ENCODE measurements at regions of chr7 and their contacts with region 1.

Region 1: GRCh38 chr7:128409596-128410160 is at the start of gene IMPDH1:
- DNase-seq: peak; percentile 85 to 96
- H3K4me3 ChIP-seq: peak within 1 kb of the TSS; percentile 62 to 87
- H3K27ac ChIP-seq: peak within 1 kb of the TSS; percentile 93 to 94
- H3K4me1 ChIP-seq: peaks cover 0 to 39% (median 33%) of the 10 kb centered on the region in 4 donors
- H3K27me3 ChIP-seq: no peaks in the 10 kb centered on the region
- CTCF ChIP-seq: no peak

Region 2: DNA sequence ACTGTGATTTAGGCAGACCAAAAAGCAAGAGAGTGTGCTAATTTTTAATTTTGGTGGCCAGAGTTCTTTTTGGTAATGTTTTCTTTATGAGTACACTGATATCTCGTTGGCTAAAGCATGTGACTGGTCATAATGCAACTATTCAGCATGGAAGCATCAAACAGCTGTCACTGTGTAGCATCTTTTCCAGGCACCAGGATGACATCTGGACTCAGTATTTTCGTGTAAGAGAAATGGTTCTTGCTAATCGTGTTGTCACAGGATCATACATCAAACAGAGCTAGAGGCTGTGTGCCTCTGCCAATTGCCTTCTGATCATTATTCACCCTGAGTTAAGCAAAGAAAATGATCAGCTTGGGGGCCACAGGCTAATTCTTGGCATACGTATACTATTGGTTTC is 638.8 kb before region 1 on chr7:
- intact Hi-C with region 1: loop called (anchors 5 kb)
- DNase-seq: no peak
- H3K4me3 ChIP-seq: no peak overlapping the region
- H3K27ac ChIP-seq: no peak overlapping the region
- H3K4me1 ChIP-seq: peaks cover 0 to 19% (median 3%) of the 10 kb centered on the region in 4 donors
- H3K27me3 ChIP-seq: no peaks in the 10 kb centered on the region
- CTCF ChIP-seq: no peak

Region 3: DNA sequence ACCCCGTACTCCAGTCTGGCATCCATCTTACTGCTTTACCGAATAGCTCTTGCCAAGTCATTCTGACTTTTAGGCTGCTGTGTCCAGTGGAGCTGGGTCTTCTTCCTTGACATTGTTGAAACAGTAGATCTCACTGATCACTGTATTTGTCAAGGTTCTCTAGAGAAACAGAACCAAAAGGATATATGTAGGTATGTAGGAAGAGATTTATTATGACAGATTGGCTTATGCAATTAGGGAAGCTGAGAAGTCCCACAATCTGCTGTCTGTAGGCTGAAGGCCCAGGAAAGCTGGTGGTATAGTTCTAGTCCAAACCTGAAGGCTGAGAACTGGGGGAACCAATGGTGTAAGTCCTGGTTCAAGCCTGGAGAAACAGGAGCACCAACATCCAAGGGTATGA is 36.1 kb before region 1 on chr7:
- intact Hi-C with region 1: no loop called
- DNase-seq: no peak
- H3K4me3 ChIP-seq: no peak overlapping the region
- H3K27ac ChIP-seq: no peak overlapping the region
- H3K4me1 ChIP-seq: no peaks in the 10 kb centered on the region
- H3K27me3 ChIP-seq: no peaks in the 10 kb centered on the region
- CTCF ChIP-seq: no peak

Region 4: GRCh38 chr7:128455551-128456254 is 46.0 kb after region 1 on chr7 and contains the start of gene HILPDA:
- intact Hi-C with region 1: loop called (anchors 5 kb)
- DNase-seq: peak; percentile 93 to 97
- H3K4me3 ChIP-seq: peak within 1 kb of the TSS; percentile 65 to 85
- H3K27ac ChIP-seq: peak within 1 kb of the TSS; percentile 87 to 92
- H3K4me1 ChIP-seq: peaks cover 0 to 46% (median 42%) of the 10 kb centered on the region in 4 donors
- H3K27me3 ChIP-seq: no peaks in the 10 kb centered on the region
- CTCF ChIP-seq: no peak